ENCODE measurements at regions of chr7 and their contacts with region 1.

Region 1: GRCh38 chr7:159126311-159127260 is 18.1 kb downstream of the VIPR2 start:
- DNase-seq: no peak
- ATAC-seq: no peak
- H3K4me3 ChIP-seq: no peak overlapping the region
- H3K27ac ChIP-seq: no peak overlapping the region
- H3K4me1 ChIP-seq: no peaks in the 10 kb centered on the region
- H3K27me3 ChIP-seq: peaks cover 57% of the 10 kb centered on the region
- CTCF ChIP-seq: no peak

Region 2: DNA sequence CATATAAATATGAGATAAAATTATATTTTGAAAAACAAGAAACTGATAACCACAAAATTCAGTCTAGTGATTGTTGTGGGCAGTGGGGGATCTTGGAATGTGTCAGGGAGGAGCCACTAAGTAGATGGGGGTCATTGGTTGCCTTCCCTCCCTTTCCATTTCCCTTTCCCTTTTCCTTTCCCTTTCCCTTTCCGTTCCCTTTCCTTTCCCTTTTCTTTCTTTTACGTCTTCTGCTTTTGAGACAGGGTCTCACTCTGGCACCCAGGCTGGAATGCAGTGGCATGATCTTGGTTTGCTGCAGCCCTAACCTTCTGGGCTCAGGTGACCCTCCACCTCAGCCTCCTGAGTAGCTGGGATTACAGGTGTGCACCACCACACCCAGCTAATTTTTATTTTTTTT is 219.2 kb before region 1 on chr7:
- CTCF ChIA-PET with region 1: interaction called, 12 read pairs
- POLR2A ChIA-PET with region 1: no interaction called
- intact Hi-C with region 1: no loop called
- DNase-seq: no peak
- ATAC-seq: no peak
- H3K4me3 ChIP-seq: no peak overlapping the region
- H3K27ac ChIP-seq: no peak overlapping the region
- H3K4me1 ChIP-seq: no peaks in the 10 kb centered on the region
- H3K27me3 ChIP-seq: no peaks in the 10 kb centered on the region
- CTCF ChIP-seq: no peak

Region 3: DNA sequence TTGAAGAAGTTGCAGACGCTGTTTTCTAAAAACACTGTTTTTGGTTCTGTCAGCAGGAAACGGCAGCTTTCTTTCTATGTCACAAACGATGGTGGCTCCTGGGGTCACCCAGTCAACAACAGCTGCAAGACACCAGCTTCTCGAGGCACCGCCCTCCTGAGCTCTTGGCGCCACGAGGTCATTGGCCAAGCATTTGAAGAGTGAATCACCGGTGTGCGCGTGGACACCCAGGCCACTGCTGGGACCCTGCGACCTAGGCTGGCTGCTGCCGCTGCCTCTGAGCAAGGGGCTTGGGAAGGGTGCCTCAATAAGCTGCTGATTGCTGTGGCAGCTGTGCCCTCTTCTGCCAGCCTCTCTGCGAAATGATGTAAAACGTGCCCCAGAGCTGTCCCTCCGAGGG is 40.6 kb after region 1 on chr7:
- CTCF ChIA-PET with region 1: no interaction called
- POLR2A ChIA-PET with region 1: no interaction called
- intact Hi-C with region 1: no loop called
- DNase-seq: no peak
- ATAC-seq: no peak
- H3K4me3 ChIP-seq: no peak overlapping the region
- H3K27ac ChIP-seq: no peak overlapping the region
- H3K4me1 ChIP-seq: no peaks in the 10 kb centered on the region
- H3K27me3 ChIP-seq: no peaks in the 10 kb centered on the region
- CTCF ChIP-seq: no peak

Region 4: DNA sequence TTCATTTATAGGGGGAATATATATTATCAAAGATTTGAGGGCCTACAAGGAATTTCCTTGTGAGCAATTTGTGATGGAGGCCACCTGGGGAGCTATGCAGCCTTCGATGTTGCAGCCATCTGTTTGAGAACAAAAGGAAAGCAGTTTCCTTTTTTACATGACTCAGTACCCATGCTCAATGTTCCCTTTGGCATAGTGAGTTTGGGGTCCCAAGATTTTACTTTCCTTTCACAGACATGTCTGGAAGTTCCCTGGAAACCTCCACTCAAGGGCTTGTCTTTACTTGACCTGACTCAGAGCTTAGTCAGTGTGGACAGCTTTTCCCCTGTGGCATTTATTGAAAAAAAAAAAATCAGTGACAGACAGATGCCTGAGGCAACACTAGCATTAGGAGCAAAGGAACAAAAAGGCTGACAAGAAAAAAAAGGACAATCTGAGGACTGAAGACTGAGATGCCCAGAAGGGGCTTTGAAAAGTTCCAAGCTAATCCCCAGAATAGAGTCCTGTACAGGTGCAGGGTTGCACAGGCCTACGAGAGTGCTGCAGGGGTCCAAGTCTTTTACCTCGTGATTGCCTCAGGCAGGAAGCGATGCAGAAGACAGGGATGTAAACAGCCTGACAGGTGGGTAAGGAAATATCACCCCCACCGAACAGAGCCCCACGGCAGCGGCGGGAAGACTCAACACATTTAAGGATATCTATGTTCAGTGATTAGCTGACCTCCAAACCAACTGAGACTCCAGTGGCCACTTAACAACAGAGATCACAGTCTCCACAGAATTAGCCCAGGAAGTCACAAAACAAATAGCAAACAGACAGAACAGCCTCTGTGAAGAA is 91.8 kb after region 1 on chr7:
- CTCF ChIA-PET with region 1: interaction called, 19 read pairs
- POLR2A ChIA-PET with region 1: no interaction called
- intact Hi-C with region 1: no loop called
- DNase-seq: peak; percentile 57
- ATAC-seq: peak; percentile 33
- H3K4me3 ChIP-seq: no peak overlapping the region
- H3K27ac ChIP-seq: no peak overlapping the region
- H3K4me1 ChIP-seq: peaks cover 13% of the 10 kb centered on the region
- H3K27me3 ChIP-seq: peaks cover 35% of the 10 kb centered on the region
- CTCF ChIP-seq: no peak

Measured in PC-3 (cell line).